Activated CD8-positive, alpha-beta T cell treated with anti-CD3 and anti-CD28 coated beads for 36 hours (primary cell): ENCODE measurements at regions of chr1 and their contacts with region 1.

Region 1: GRCh38 chr1:205396967-205397616 is 24.8 kb downstream of the LEMD1 start:
- DNase-seq: peak; percentile 29
- ATAC-seq: peak; percentile 88
- H3K4me3 Mint-ChIP-seq: no peak overlapping the region
- H3K27ac Mint-ChIP-seq: no peak overlapping the region
- H3K4me1 Mint-ChIP-seq: no peaks in the 10 kb centered on the region
- H3K27me3 Mint-ChIP-seq: peaks cover 4% of the 10 kb centered on the region
- CTCF ChIP-seq: peak; percentile 87

Region 2: DNA sequence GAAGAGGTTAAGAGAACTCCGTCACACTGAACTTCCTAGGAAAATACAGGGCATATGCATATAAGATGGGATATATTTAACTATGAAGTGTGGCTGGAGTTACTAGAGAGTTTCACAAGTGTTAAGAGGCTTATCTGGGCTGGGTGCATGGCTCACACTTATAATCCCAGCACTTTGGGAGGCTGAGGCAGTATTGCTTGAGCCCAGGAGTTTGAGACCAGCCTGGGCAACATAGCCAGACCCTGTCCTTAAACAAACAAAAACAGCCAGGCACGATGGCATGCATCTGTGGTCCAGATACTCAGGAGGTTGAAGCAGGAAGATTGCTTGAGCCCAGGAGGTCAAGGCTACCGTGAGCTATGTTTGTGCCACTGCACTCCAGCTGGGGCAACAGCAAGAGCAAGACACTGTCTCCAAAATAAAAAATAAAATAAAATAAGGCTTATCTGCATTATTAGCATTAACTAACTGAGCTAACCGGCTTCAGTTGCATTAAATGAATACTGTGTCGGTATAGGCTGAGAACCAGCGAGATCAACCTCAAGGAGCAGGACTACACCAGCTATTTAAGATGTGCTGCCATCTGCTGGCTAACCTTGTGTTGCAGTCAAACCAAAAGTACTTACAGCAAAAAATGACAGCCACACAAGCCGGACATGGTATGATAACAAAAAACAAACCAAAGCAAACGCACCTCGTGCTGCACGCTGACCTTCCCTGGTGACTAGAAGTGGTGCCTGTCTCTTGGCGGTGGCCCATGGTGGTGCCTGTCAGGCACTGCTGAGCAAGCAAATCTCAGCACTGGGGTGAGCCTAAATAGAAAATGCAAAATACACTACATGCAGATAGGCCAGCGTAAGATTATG is 255.6 kb before region 1 on chr1:
- CTCF ChIA-PET with region 1: no interaction called
- POLR2A ChIA-PET with region 1: no interaction called
- intact Hi-C with region 1: no loop called
- DNase-seq: peak; percentile 92
- ATAC-seq: peak; percentile 94
- H3K4me3 Mint-ChIP-seq: no peak overlapping the region
- H3K27ac Mint-ChIP-seq: no peak overlapping the region
- H3K4me1 Mint-ChIP-seq: peaks cover 5% of the 10 kb centered on the region
- H3K27me3 Mint-ChIP-seq: no peaks in the 10 kb centered on the region
- CTCF ChIP-seq: peak; percentile 79

Region 3: GRCh38 chr1:205410581-205411298 is 13.6 kb after region 1 on chr1:
- CTCF ChIA-PET with region 1: interaction called, 10 read pairs
- POLR2A ChIA-PET with region 1: no interaction called
- intact Hi-C with region 1: no loop called
- DNase-seq: no peak
- ATAC-seq: no peak
- H3K4me3 Mint-ChIP-seq: no peak overlapping the region
- H3K27ac Mint-ChIP-seq: no peak overlapping the region
- H3K4me1 Mint-ChIP-seq: peaks cover 4% of the 10 kb centered on the region
- H3K27me3 Mint-ChIP-seq: peaks cover 3% of the 10 kb centered on the region
- CTCF ChIP-seq: no peak

Region 4: GRCh38 chr1:205430696-205431305 is 33.7 kb after region 1 on chr1:
- CTCF ChIA-PET with region 1: interaction called, 29 read pairs
- POLR2A ChIA-PET with region 1: no interaction called
- intact Hi-C with region 1: no loop called
- DNase-seq: peak; percentile 70
- ATAC-seq: peak; percentile 87
- H3K4me3 Mint-ChIP-seq: peak overlapping the region; percentile 74
- H3K27ac Mint-ChIP-seq: no peak overlapping the region
- H3K4me1 Mint-ChIP-seq: peaks cover 7% of the 10 kb centered on the region
- H3K27me3 Mint-ChIP-seq: no peaks in the 10 kb centered on the region
- CTCF ChIP-seq: peak; percentile 82

Region 5: GRCh38 chr1:205528887-205529825 is 132.1 kb after region 1 on chr1:
- CTCF ChIA-PET with region 1: interaction called, 72 read pairs
- POLR2A ChIA-PET with region 1: no interaction called
- intact Hi-C with region 1: no loop called
- DNase-seq: peak; percentile 90
- ATAC-seq: peak; percentile 92
- H3K4me3 Mint-ChIP-seq: peak overlapping the region; percentile 57
- H3K27ac Mint-ChIP-seq: no peak overlapping the region
- H3K4me1 Mint-ChIP-seq: peaks cover 5% of the 10 kb centered on the region
- H3K27me3 Mint-ChIP-seq: no peaks in the 10 kb centered on the region
- CTCF ChIP-seq: peak; percentile 98